ENCODE measurements at regions of chr2 and their contacts with region 1.

Region 1: DNA sequence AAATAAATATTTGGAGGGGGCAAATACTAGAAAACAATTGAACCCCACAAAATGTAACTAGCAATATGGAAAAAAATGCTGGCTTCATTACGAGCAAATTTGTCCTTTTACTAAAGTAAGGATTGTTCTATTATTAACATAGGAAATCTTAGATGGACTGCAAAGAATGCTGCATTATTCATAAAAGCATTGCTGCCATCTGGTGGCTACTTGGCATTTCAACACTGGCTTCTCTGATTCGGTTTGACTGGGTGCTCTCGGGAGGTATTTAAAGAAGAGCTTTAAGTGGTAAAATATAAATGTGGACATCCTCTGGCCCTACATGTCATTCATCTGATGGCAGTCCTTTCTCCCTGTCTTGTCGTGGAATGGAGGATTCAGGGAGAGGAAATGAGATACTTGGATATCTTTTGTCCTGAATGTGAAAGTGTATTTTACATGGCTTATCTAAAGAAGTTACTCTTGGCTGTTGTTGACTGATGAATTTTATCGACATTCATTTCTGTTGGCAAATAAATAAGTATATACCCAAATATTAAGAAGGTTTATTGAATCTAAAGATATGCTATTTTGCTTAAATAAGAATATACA is 130.2 kb downstream of the ARHGAP15 start:
- DNase-seq: no peak

Region 2: DNA sequence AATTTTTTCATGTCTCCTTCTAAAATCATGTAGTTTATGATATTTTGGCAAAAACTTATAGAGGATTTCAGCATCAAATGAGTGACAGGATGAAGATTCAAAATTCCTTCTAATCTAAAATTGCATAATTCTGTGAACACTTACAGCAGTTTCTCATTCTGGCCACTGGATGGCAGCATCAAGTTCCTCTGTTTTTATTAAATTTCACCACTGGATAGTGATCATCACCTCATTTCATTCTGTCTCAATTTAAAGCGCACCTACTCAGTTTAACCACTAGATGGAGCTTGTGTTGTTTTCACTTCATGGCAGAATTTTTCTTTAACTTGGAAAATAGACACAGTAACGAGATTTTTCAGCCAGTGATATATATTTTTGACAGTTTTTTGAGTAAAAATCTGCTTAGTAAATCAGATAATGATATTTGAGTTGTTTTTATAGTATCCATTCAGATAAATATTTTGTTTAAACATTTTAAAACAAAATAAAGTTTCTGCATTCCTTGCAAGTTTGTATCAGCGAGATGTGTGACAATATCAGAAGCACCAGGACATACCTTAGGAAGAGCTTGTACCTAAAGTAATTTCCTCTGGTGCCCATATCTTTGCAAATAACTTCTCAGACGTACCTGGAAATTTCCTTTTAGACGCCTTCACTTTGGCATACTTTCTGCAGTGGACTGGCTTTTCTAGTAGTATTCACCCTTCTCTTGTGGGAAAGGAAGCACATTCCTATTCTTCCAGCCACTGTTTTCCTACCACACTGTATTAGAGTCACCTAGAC is 225.0 kb before region 1 on chr2:
- intact Hi-C with region 1: loop called (anchors 10 kb)
- DNase-seq: no peak

Region 3: DNA sequence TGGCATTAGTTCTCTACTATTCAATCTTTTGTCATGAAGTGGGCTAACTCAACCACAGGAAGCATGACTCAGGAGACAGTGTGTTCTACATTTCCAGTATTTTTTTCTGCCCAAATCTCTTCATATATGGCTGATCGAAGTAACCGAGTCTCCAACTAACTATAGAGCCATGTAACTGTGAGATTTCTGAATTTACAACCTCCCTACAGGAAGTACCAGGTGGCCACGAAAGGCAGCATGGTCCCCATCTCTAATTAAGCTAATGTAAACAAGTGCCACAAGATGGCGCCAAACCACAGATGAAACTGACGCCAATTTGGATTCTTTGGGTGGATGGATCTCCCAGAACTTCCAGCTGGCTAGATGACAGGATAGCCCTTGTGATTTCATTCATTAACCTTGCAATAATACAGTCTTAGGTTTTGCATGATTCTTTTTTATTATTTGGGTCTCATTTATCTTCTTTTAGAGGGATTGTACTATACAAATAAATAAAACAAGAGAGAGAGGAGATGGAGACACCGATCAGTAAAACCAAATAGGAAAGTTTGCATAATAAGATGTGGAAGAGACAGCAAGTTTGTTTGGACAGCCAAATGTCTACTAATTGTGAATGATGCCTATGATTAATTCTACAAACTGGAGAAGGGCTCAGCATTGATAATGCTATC is 148.6 kb before region 1 on chr2:
- intact Hi-C with region 1: loop called (anchors 5 kb)
- DNase-seq: peak; percentile 76

Measured in cardiac septum (tissue), 1 donor.